ENCODE measurements at regions of chr7 and their contacts with region 1.

Region 1: DNA sequence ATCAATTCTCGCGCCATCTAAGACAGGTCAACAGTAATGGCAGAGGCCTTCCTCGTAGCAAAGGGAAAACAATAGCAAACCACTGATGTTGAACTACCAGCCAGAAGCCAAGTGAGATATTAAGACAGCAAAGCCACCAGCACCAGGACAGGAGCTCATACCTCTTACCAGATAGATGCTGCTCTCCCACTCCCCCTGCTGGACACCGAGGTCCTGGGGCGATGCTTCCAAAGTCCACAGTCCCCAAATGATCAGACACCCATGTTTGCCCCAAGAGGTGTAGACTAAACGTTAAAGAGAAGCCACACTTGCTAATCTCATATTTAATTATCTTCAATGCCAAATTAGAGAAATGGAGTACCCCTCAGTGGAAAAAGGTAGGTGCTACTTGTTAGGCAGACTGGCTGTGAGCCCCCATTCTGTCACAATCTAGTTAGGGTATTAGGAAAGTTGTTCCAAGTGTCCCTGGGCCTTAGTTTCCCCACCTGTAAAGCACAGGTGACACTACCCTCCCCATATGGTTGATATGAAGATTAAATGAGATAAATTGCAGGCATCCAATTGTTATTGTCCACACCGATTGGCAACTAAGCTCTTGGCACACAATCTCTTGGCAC is 39.9 kb downstream of the TOMM7 start:
- DNase-seq: peak; percentile 72
- ATAC-seq: peak; percentile 71

Region 2: DNA sequence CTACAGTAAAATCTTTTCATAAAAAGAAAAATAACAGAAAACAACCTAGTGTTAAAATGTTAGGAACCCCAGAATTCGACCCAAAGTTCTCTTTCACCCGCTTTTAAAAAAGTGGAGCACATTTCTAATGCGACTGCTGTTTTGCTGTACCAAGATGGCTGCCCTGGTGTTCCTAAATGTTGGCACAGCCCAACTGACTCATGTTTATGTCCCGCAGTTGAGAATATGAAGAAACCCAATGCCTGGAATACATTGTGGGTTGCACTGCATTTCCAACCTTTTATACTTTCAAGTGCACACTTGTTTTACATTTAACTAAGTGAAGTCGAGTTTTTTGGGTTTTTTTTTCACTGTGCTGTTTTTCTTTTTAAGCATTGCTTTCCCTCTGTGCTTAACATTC is 283.7 kb before region 1 on chr7:
- intact Hi-C with region 1: no loop called
- DNase-seq: no peak
- ATAC-seq: no peak

Region 3: GRCh38 chr7:22559829-22560489 is 222.8 kb before region 1 on chr7:
- intact Hi-C with region 1: loop called (anchors 5 kb)
- DNase-seq: peak; percentile 71
- ATAC-seq: peak; percentile 79

Region 4: GRCh38 chr7:22771194-22771871 is 11.4 kb before region 1 on chr7:
- intact Hi-C with region 1: no loop called
- DNase-seq: no peak
- ATAC-seq: no peak

Measured in Right ventricle myocardium superior (tissue), 1 donor.